Activated T-helper 1 cell treated with anti-CD3 and anti-CD28 coated beads, Interleukin-12 subunit alpha, Interleukin-12 subunit beta, Interleukin-2, Interleukin-4 antibody, amounts not matched to agents 30 ng/mL and 10 ng/mL and 1 ng/mL, durations not matched to agents 14 hours and 24 hours and 36 hours (primary cell): ENCODE measurements at regions of chr1 and their contacts with region 1.

Region 1: GRCh38 chr1:10209905-10210810 is at the start of gene KIF1B:
- DNase-seq: peak; percentile 97
- H3K4me3 Mint-ChIP-seq: peak within 1 kb of the TSS; percentile 92
- H3K27ac Mint-ChIP-seq: peak within 1 kb of the TSS; percentile 83
- H3K4me1 Mint-ChIP-seq: peaks cover 35% of the 10 kb centered on the region
- H3K27me3 Mint-ChIP-seq: peaks cover 12% of the 10 kb centered on the region
- total RNA-seq, gene KIF1B: 15.8 and 19.0 TPM in 2 replicates

Region 2: DNA sequence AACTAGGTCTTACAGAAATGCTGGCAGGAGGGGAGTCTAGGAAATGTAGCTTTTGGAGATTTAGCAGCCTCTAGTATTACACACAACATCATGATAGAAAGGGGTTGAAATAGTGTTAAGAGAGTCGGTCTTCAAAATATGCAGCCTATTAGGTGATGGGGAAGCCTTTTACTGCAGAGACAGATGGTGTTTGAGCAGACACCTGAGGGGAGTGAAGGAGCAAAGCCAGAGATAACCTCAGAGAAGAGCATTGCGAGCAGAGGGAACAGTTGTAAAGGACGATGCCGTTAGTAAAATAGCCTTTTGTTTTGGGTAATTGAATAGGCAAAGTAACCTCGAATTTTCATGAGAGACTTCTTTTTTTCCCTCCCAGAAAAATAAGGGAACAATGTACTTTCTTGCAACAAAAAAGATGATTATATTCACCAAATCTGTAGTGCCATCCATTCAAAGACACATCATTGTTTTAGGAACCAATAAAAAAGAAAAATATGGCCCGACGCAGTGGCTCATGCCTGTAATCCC is 66.1 kb before region 1 on chr1:
- intact Hi-C with region 1: no loop called
- DNase-seq: no peak
- H3K4me3 Mint-ChIP-seq: no peak overlapping the region
- H3K27ac Mint-ChIP-seq: no peak overlapping the region
- H3K4me1 Mint-ChIP-seq: no peaks in the 10 kb centered on the region
- H3K27me3 Mint-ChIP-seq: no peaks in the 10 kb centered on the region

Region 3: GRCh38 chr1:10236405-10237156 is 26.4 kb after region 1 on chr1:
- intact Hi-C with region 1: loop called (anchors 2 kb)
- DNase-seq: no peak
- H3K4me3 Mint-ChIP-seq: no peak overlapping the region
- H3K27ac Mint-ChIP-seq: peak overlapping the region; percentile 19
- H3K4me1 Mint-ChIP-seq: peaks cover 16% of the 10 kb centered on the region
- H3K27me3 Mint-ChIP-seq: peaks cover 1% of the 10 kb centered on the region

Region 4: DNA sequence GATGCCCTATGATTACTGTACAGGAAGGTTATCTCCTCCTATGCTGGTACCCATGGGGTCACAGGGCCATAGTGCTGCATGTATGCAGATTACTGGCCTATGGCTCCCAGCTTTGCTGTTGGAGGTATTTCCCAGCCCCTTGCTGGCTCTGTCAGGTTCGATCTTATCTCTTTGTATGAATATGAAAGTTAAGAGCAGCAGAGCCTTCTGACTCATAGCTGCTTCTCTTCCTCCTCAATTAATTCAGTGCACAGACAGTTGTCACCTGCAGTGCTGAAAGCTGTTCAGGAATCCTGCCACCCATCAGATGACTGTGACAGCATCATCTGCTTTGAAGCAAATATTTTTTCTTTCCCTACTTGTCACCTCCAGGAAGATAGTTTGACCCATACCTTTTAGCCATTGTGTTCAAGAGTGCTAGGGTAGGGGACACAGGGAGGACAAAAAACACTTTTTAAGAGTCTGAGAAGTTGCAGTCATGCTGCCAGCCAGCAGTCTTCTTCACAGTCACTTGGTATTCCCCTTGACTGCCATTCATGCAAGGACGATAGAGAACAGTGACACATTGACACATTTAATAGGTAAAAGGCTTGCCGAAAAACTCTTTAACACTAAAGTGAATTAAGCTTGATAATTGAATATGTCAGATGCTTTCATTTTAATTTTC is 73.3 kb after region 1 on chr1:
- intact Hi-C with region 1: loop called (anchors 1 kb)
- DNase-seq: peak; percentile 5
- H3K4me3 Mint-ChIP-seq: no peak overlapping the region
- H3K27ac Mint-ChIP-seq: peak overlapping the region; percentile 55
- H3K4me1 Mint-ChIP-seq: peaks cover 22% of the 10 kb centered on the region
- H3K27me3 Mint-ChIP-seq: no peaks in the 10 kb centered on the region

Region 5: GRCh38 chr1:10398734-10399623 is 188.8 kb after region 1 on chr1 and contains the start of gene PGD:
- intact Hi-C with region 1: loop called (anchors 1 kb)
- DNase-seq: peak; percentile 98
- H3K4me3 Mint-ChIP-seq: peak within 1 kb of the TSS; percentile 92
- H3K27ac Mint-ChIP-seq: peak within 1 kb of the TSS; percentile 77
- H3K4me1 Mint-ChIP-seq: peaks cover 25% of the 10 kb centered on the region
- H3K27me3 Mint-ChIP-seq: no peaks in the 10 kb centered on the region
- total RNA-seq, gene PGD: 131 and 142 TPM in 2 replicates

Region 6: GRCh38 chr1:10472220-10473144 is 262.3 kb after region 1 on chr1 and contains the start of gene DFFA:
- intact Hi-C with region 1: loop called (anchors 2 kb)
- DNase-seq: peak; percentile 90
- H3K4me3 Mint-ChIP-seq: peak within 1 kb of the TSS; percentile 89
- H3K27ac Mint-ChIP-seq: peak within 1 kb of the TSS; percentile 85
- H3K4me1 Mint-ChIP-seq: peaks cover 45% of the 10 kb centered on the region
- H3K27me3 Mint-ChIP-seq: no peaks in the 10 kb centered on the region
- total RNA-seq, gene DFFA: 54.7 and 60.1 TPM in 2 replicates